ENCODE measurements at regions of chr10 and their contacts with region 1.

Region 1: GRCh38 chr10:5813287-5814109 is at the start of gene GDI2:
- DNase-seq: peak in 1 of 2 donors; percentile 96
- H3K4me3 ChIP-seq: peak within 1 kb of the TSS; percentile 91 to 100
- H3K27ac ChIP-seq: peak within 1 kb of the TSS; percentile 99
- H3K4me1 ChIP-seq: peaks cover 49% of the 10 kb centered on the region
- H3K27me3 ChIP-seq: no peaks in the 10 kb centered on the region
- CTCF ChIP-seq: no peak
- POLR2A ChIP-seq: peak in 1 of 2 donors; percentile 80
- total RNA-seq, gene GDI2: 174 TPM

Region 2: GRCh38 chr10:5479481-5480161 is 333.9 kb before region 1 on chr10:
- intact Hi-C with region 1: no loop called
- DNase-seq: no peak
- H3K4me3 ChIP-seq: no peak overlapping the region
- H3K27ac ChIP-seq: no peak overlapping the region
- H3K4me1 ChIP-seq: no peaks in the 10 kb centered on the region
- H3K27me3 ChIP-seq: no peaks in the 10 kb centered on the region
- CTCF ChIP-seq: no peak
- POLR2A ChIP-seq: no peak

Region 3: DNA sequence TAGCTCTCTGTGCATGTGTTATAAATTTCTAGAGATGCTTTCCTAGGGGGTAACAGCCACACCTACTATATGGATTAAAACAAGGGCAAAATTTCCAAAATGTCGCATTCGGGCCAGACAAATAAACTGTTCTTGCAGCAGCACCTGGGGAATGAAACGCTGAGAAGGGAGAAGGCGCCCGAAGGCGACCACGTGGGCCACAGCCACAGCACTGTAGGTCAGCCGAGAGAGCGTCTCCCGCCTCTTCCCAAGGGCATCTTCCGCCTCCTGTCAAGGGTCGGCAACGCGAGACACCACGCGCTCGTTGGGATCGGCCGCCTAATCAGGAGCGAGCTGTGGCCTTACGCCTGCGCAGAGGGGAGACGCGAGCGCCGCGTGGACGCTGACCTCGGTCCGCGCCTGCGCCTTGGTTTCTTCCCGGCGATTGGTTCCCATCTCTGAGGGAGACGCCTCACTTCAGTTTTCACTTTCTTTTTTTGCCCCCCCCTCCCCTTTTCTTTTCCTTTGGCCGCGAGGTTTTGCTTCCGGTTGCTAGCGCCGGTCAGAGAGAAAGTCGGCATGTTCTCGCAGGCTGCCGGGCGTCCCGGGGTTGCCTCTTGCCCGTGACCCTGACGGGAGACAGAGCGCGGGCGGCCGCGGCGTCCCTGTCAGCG is 129.1 kb before region 1 on chr10 and contains the start of gene TASOR2:
- intact Hi-C with region 1: loop called (anchors 10 kb)
- DNase-seq: peak in 1 of 2 donors; percentile 96
- H3K4me3 ChIP-seq: peak within 1 kb of the TSS; percentile 85 to 90
- H3K27ac ChIP-seq: peak within 1 kb of the TSS; percentile 86
- H3K4me1 ChIP-seq: peaks cover 24% of the 10 kb centered on the region
- H3K27me3 ChIP-seq: no peaks in the 10 kb centered on the region
- CTCF ChIP-seq: no peak
- POLR2A ChIP-seq: no peak
- total RNA-seq, gene TASOR2: 51.6 TPM

Region 4: DNA sequence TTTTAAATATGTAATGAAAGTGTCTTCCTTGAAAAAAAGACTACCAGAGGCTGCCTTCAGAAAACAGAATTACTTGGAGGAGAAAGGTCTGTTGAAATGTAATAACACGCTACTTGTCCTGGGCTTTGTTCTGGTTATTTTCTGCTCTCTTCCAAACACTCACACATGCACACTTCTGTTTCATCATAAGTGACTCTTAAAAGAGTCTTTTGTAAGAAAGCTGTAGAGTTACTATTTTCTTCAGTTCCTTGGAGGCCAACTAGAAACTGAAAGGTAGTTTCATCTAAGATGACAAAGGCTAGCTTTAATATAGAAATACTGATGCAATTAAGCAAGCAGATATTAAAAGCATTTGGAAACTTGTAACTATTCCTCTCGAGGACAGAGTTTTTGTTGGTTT is 89.8 kb before region 1 on chr10:
- intact Hi-C with region 1: no loop called
- DNase-seq: no peak
- H3K4me3 ChIP-seq: no peak overlapping the region
- H3K27ac ChIP-seq: no peak overlapping the region
- H3K4me1 ChIP-seq: no peaks in the 10 kb centered on the region
- H3K27me3 ChIP-seq: no peaks in the 10 kb centered on the region
- CTCF ChIP-seq: no peak
- POLR2A ChIP-seq: no peak

Region 5: DNA sequence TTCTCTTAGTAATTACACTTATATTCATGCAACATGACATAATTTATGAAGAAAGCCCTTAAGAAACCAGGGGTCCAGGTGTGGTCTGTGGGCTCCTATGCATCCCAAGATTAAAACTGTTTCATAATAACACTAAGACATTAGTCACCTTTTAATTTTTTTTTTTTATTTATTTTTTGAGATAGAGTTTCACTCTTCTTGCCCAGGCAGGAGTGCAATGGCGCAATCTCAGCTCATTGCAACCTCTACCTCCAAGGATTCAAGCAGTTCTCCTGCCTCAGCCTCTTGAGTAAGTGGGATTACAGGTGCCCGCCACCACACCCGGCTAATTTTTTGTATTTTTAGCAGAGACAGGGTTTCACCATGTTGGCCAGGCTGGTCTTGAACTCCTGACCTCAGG is 12.7 kb before region 1 on chr10:
- intact Hi-C with region 1: no loop called
- DNase-seq: no peak
- H3K4me3 ChIP-seq: no peak overlapping the region
- H3K27ac ChIP-seq: no peak overlapping the region
- H3K4me1 ChIP-seq: peaks cover 26% of the 10 kb centered on the region
- H3K27me3 ChIP-seq: no peaks in the 10 kb centered on the region
- CTCF ChIP-seq: no peak
- POLR2A ChIP-seq: no peak

Region 6: GRCh38 chr10:5873515-5873995 is 60.1 kb after region 1 on chr10:
- intact Hi-C with region 1: loop called (anchors 10 kb)
- DNase-seq: no peak
- H3K4me3 ChIP-seq: no peak overlapping the region
- H3K27ac ChIP-seq: no peak overlapping the region
- H3K4me1 ChIP-seq: peaks cover 13% of the 10 kb centered on the region
- H3K27me3 ChIP-seq: no peaks in the 10 kb centered on the region
- CTCF ChIP-seq: peak; percentile 68 to 80 (median 70)
- POLR2A ChIP-seq: no peak

Region 7: DNA sequence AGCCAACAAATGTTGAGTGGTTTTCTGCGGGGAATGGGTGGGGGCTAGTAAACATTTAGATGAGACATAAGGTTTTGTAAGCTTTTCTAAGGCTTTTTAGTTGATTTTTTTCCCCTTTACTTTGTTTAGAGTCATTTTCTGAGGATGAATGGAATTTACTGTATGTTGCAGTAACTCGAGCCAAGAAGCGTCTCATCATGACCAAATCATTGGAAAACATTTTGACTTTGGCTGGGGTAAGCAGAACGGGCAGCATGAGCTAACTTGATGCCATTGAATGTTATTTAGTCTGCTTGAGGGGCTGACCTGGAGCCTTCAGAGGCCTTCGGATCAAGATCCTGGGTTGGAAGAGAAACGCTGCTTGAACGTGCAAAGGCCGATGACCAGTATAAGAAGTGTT is 113.8 kb after region 1 on chr10:
- intact Hi-C with region 1: no loop called
- DNase-seq: no peak
- H3K4me3 ChIP-seq: no peak overlapping the region
- H3K27ac ChIP-seq: peak overlapping the region; percentile 38
- H3K4me1 ChIP-seq: no peaks in the 10 kb centered on the region
- H3K27me3 ChIP-seq: no peaks in the 10 kb centered on the region
- CTCF ChIP-seq: no peak
- POLR2A ChIP-seq: no peak